GM13976 (cell line): ENCODE measurements at regions of chr7 and their contacts with region 1.

Region 1: GRCh38 chr7:40047661-40048060 is 86.8 kb downstream of the MPLKIP start:
- DNase-seq: no peak
- CTCF ChIP-seq: no peak

Region 2: GRCh38 chr7:39948956-39949928 is 98.4 kb before region 1 on chr7:
- in situ Hi-C with region 1: loop called (anchors 10 kb)
- DNase-seq: peak; percentile 92
- CTCF ChIP-seq: no peak

Region 3: GRCh38 chr7:40598915-40599314 is 551.3 kb after region 1 on chr7:
- in situ Hi-C with region 1: no loop called
- DNase-seq: no peak
- CTCF ChIP-seq: no peak